ENCODE measurements at regions of chr6 and their contacts with region 1.

Region 1: GRCh38 chr6:24910961-24911712 is 24.6 kb downstream of the RIPOR2 start:
- DNase-seq: peak; percentile 81
- H3K4me3 ChIP-seq: peak overlapping the region; percentile 57 to 72
- H3K27ac ChIP-seq: no peak overlapping the region
- H3K4me1 ChIP-seq: peaks cover 0 to 12% of the 10 kb centered on the region in 2 experiments; a peak in 1 of 4 replicates
- H3K27me3 ChIP-seq: peaks cover 18% of the 10 kb centered on the region
- CTCF ChIP-seq: no peak
- EP300 ChIP-seq: no peak
- RAD21 ChIP-seq: no peak

Region 2: DNA sequence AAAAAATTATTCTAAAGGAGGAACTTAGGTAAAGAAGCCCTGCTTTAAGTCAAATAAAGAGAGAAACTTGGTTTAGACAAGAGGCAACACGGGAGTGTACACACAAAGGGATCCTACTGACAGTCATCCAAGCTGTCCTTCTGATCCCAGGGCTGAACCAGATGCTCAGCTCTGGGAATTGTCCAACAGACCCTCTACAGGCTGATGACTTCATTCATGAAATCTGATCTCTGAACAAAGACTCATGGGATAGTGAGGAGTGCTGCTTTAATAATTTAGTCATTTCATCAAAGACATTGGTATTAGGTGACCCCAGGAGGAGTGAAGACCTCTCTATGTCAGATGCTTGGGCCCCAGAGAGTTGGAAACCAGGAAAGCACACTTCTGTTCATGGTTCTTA is 46.8 kb before region 1 on chr6:
- CTCF ChIA-PET with region 1: no interaction called
- POLR2A ChIA-PET with region 1: no interaction called
- DNase-seq: no peak
- H3K4me3 ChIP-seq: no peak overlapping the region
- H3K27ac ChIP-seq: no peak overlapping the region
- H3K4me1 ChIP-seq: no peaks in the 10 kb centered on the region; a peak in 1 of 4 replicates
- H3K27me3 ChIP-seq: no peaks in the 10 kb centered on the region
- CTCF ChIP-seq: no peak
- EP300 ChIP-seq: no peak
- RAD21 ChIP-seq: no peak

Region 3: GRCh38 chr6:24899997-24900325 is 11.2 kb before region 1 on chr6:
- CTCF ChIA-PET with region 1: interaction called, 15 read pairs
- POLR2A ChIA-PET with region 1: no interaction called
- DNase-seq: no peak
- H3K4me3 ChIP-seq: no peak overlapping the region
- H3K27ac ChIP-seq: no peak overlapping the region
- H3K4me1 ChIP-seq: no peaks in the 10 kb centered on the region; a peak in 1 of 4 replicates
- H3K27me3 ChIP-seq: no peaks in the 10 kb centered on the region
- CTCF ChIP-seq: no peak
- EP300 ChIP-seq: no peak
- RAD21 ChIP-seq: no peak

Region 4: DNA sequence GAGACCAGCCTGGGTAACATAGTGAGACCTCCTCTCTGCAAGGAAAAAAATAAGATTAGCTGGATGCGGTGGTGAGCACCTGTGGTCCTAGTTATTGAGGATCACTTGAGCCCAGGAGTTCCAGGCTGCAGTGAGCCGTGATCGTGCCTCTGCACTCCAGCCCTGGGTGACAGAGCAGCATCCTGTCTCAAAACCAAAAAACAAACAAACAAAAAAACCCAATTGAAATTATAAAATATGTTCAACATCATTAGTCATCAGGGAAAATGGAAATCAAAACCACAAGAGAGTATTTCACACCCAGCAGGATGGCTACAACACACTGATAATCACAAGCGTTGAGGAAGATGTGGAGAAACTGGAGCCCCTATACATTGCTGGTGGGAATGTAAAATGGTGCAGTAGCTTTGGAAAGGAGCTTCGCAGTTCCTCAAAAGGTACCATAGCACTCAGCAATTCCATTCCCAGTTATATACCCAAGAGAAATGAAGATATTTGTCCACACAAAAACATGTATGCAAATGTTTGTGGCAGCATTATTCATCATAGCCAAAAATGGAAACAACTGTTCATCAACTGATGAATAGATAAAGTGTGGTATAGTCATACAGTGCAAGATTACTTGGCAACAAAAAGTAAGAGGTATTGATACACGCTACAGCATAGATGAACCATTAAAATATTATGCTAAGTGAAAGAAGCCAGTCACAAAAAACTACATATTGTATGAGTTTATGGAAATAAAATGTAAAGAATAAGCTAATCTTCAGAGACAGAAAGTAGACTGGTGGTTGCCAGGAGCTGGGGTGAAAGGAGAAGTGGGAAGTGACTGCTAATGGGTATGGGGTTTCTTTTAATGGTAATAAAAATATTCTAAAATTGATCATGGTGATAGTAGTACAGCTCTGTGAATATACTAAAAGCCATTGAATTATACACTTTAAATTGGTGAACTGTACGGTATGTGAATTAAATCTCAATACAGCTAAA is 63.3 kb after region 1 on chr6:
- CTCF ChIA-PET with region 1: no interaction called
- POLR2A ChIA-PET with region 1: no interaction called
- DNase-seq: no peak
- H3K4me3 ChIP-seq: no peak overlapping the region
- H3K27ac ChIP-seq: no peak overlapping the region
- H3K4me1 ChIP-seq: no peaks in the 10 kb centered on the region
- H3K27me3 ChIP-seq: no peaks in the 10 kb centered on the region
- CTCF ChIP-seq: no peak
- EP300 ChIP-seq: no peak
- RAD21 ChIP-seq: no peak

Region 5: GRCh38 chr6:25056130-25056529 is 145.0 kb after region 1 on chr6:
- CTCF ChIA-PET with region 1: no interaction called
- POLR2A ChIA-PET with region 1: no interaction called
- DNase-seq: no peak
- H3K4me3 ChIP-seq: no peak overlapping the region
- H3K27ac ChIP-seq: peak overlapping the region in 1 of 2 experiments; percentile 99; a peak in 1 of 4 replicates
- H3K4me1 ChIP-seq: peaks cover 8 to 22% of the 10 kb centered on the region in 2 experiments; a peak in 3 of 4 replicates
- H3K27me3 ChIP-seq: no peaks in the 10 kb centered on the region
- CTCF ChIP-seq: no peak
- EP300 ChIP-seq: no peak
- RAD21 ChIP-seq: no peak

Measured in SK-N-SH (cell line).